Sigmoid colon (tissue), 7 donors: ENCODE measurements at regions of chr5 and their contacts with region 1.

Region 1: GRCh38 chr5:15499528-15500324 is at the start of gene FBXL7:
- DNase-seq: peak; percentile 92
- H3K4me3 ChIP-seq: peak within 1 kb of the TSS; percentile 81 to 88 (median 84)
- H3K27ac ChIP-seq: peak within 1 kb of the TSS; percentile 89 to 92 (median 91)
- H3K4me1 ChIP-seq: peaks cover 0 to 34% (median 17%) of the 10 kb centered on the region in 4 donors
- H3K27me3 ChIP-seq: no peaks in the 10 kb centered on the region
- CTCF ChIP-seq: no peak
- EP300 ChIP-seq: no peak
- POLR2A ChIP-seq: peak in 1 of 2 donors; percentile 24
- total RNA-seq, gene FBXL7: 18.2 to 44.3 (median 20.9) TPM

Region 2: GRCh38 chr5:15452781-15453180 is 46.9 kb before region 1 on chr5:
- intact Hi-C with region 1: loop called (anchors 1 kb)
- DNase-seq: no peak
- H3K4me3 ChIP-seq: peak overlapping the region in 1 of 4 donors; percentile 1
- H3K27ac ChIP-seq: peak overlapping the region in 3 of 4 donors; percentile 51 to 73 (median 73)
- H3K4me1 ChIP-seq: peaks cover 0 to 39% (median 22%) of the 10 kb centered on the region in 4 donors
- H3K27me3 ChIP-seq: no peaks in the 10 kb centered on the region
- CTCF ChIP-seq: no peak
- EP300 ChIP-seq: no peak
- POLR2A ChIP-seq: no peak

Region 3: GRCh38 chr5:15574806-15575325 is 75.1 kb after region 1 on chr5:
- intact Hi-C with region 1: loop called (anchors 5 kb)
- DNase-seq: no peak
- H3K4me3 ChIP-seq: no peak overlapping the region
- H3K27ac ChIP-seq: peak overlapping the region in 2 of 4 donors; percentile 20 to 53
- H3K4me1 ChIP-seq: peaks cover 0 to 59% (median 51%) of the 10 kb centered on the region in 4 donors
- H3K27me3 ChIP-seq: no peaks in the 10 kb centered on the region
- CTCF ChIP-seq: no peak
- EP300 ChIP-seq: no peak
- POLR2A ChIP-seq: no peak

Region 4: GRCh38 chr5:15794052-15794985 is 294.6 kb after region 1 on chr5:
- intact Hi-C with region 1: loop called (anchors 10 kb)
- DNase-seq: no peak
- H3K4me3 ChIP-seq: no peak overlapping the region
- H3K27ac ChIP-seq: no peak overlapping the region
- H3K4me1 ChIP-seq: peaks cover 0 to 60% (median 33%) of the 10 kb centered on the region in 4 donors
- H3K27me3 ChIP-seq: no peaks in the 10 kb centered on the region
- CTCF ChIP-seq: no peak
- EP300 ChIP-seq: no peak
- POLR2A ChIP-seq: no peak

Region 5: GRCh38 chr5:15821506-15821905 is 321.8 kb after region 1 on chr5:
- intact Hi-C with region 1: loop called (anchors 5 kb)
- DNase-seq: no peak
- H3K4me3 ChIP-seq: no peak overlapping the region
- H3K27ac ChIP-seq: no peak overlapping the region
- H3K4me1 ChIP-seq: peaks cover 0 to 7% (median 0%) of the 10 kb centered on the region in 4 donors
- H3K27me3 ChIP-seq: no peaks in the 10 kb centered on the region
- CTCF ChIP-seq: no peak
- EP300 ChIP-seq: no peak
- POLR2A ChIP-seq: no peak